AG04449 (cell line): ENCODE measurements at regions of chr7 and their contacts with region 1.

Region 1: GRCh38 chr7:100413346-100413745 is 15.2 kb downstream of the ZCWPW1 start:
- DNase-seq: no peak
- H3K4me3 ChIP-seq: no peak overlapping the region
- CTCF ChIP-seq: no peak

Region 2: DNA sequence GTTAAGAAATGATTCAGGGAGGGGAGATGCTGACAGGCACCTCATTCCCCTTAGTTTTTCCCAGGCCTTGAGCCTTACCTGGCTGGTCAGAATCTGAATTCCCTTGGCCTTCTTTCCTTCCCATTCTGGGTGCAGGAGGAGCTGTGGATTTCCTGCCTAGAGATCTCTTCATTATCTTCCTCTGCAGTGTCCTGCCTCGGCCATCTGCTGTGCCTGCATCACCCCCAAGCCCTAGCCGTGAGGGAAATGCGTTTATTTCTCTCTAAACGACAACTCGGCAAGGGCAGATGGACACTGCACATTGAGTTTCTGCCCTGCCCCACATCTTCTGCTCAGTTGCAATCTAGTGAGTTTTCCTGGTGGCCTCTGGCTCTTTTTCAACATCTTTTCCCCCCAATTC is 11.5 kb before region 1 on chr7:
- CTCF ChIA-PET with region 1: interaction called, 30 read pairs
- POLR2A ChIA-PET with region 1: interaction called, 4 read pairs
- DNase-seq: no peak
- H3K4me3 ChIP-seq: no peak overlapping the region
- CTCF ChIP-seq: no peak

Region 3: GRCh38 chr7:100428199-100428966 is 15.0 kb after region 1 on chr7 and contains the start of gene ZCWPW1:
- CTCF ChIA-PET with region 1: interaction called, 9 read pairs
- POLR2A ChIA-PET with region 1: interaction called, 15 read pairs
- DNase-seq: peak; percentile 81
- H3K4me3 ChIP-seq: peak within 1 kb of the TSS; percentile 92
- CTCF ChIP-seq: no peak